SK-N-SH (cell line): ENCODE measurements at regions of chr1 and their contacts with region 1.

Region 1: GRCh38 chr1:36187800-36188593 is 32.0 kb downstream of the MAP7D1 start:
- DNase-seq: peak; percentile 86
- H3K4me3 ChIP-seq: no peak overlapping the region; a peak in 1 of 4 replicates
- H3K27ac ChIP-seq: peak overlapping the region; percentile 67 to 71
- H3K4me1 ChIP-seq: peaks cover 0 to 8% of the 10 kb centered on the region in 2 experiments; a peak in 1 of 4 replicates
- H3K27me3 ChIP-seq: no peaks in the 10 kb centered on the region
- CTCF ChIP-seq: peak; percentile 84
- EP300 ChIP-seq: no peak
- RAD21 ChIP-seq: peak; percentile 96

Region 2: GRCh38 chr1:36134505-36135329 is 53.3 kb before region 1 on chr1:
- CTCF ChIA-PET with region 1: interaction called, 26 read pairs
- POLR2A ChIA-PET with region 1: no interaction called
- DNase-seq: peak; percentile 86
- H3K4me3 ChIP-seq: no peak overlapping the region; a peak in 1 of 4 replicates
- H3K27ac ChIP-seq: peak overlapping the region; percentile 45 to 89
- H3K4me1 ChIP-seq: peaks cover 14 to 43% of the 10 kb centered on the region in 2 experiments; a peak in 3 of 4 replicates
- H3K27me3 ChIP-seq: no peaks in the 10 kb centered on the region
- CTCF ChIP-seq: peak; percentile 88
- EP300 ChIP-seq: no peak
- RAD21 ChIP-seq: peak; percentile 92

Region 3: DNA sequence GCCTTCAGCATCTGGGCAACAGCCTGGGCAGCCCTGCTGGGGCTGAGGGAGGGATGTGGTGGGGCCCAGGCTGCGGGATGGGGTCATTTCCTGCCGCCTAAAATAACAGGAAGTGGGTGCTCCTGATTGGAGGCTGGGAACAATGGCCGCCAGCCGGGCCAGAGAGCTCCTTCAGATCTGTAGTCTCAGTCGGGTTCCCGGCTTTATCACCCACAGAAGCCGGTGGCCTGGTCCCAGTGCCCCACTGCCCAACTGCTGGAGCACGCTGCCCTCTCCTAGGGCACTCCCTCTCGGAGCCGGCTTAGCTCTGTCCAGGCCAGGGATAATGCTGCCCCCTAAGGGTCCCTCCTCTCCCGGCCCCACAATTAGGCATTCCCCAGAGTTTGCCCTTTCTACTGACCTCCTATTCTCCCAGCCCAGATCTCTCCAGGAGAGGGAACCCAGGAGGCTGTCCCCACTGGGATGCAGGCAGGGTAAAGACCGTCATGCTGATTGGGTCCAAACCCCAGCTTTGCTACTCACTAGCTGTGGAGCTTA is 27.0 kb before region 1 on chr1:
- CTCF ChIA-PET with region 1: interaction called, 49 read pairs
- POLR2A ChIA-PET with region 1: interaction called, 7 read pairs
- DNase-seq: peak; percentile 86
- H3K4me3 ChIP-seq: peak overlapping the region; percentile 47 to 72
- H3K27ac ChIP-seq: peak overlapping the region; percentile 81 to 83
- H3K4me1 ChIP-seq: peaks cover 31 to 44% of the 10 kb centered on the region in 2 experiments
- H3K27me3 ChIP-seq: no peaks in the 10 kb centered on the region
- CTCF ChIP-seq: peak; percentile 64
- EP300 ChIP-seq: no peak
- RAD21 ChIP-seq: peak; percentile 45

Region 4: DNA sequence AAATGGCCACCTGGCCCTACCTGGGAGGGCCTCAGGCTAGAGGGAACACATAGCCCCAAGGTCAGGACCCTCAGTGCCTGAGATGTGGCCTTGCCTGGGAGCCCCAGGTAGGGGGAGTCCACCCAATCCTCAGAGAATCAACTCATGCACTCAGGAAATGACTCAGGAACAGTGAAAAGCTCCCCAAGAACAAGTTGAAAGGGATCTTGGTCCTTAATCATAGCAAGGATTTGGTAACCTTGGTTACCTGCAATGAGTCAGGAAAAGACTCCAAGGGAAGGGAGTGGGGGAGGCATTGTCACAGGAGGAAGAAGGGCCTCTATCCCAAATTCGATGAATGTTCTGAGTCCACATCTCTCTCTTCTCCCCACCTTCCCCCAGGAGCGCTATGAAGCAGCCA is 15.0 kb before region 1 on chr1:
- CTCF ChIA-PET with region 1: interaction called, 32 read pairs
- POLR2A ChIA-PET with region 1: interaction called, 3 read pairs
- DNase-seq: no peak
- H3K4me3 ChIP-seq: peak overlapping the region in 1 of 2 experiments; percentile 17; a peak in 1 of 4 replicates
- H3K27ac ChIP-seq: peak overlapping the region in 1 of 2 experiments; percentile 78; a peak in 2 of 4 replicates
- H3K4me1 ChIP-seq: peaks cover 0 to 15% of the 10 kb centered on the region in 2 experiments; a peak in 2 of 4 replicates
- H3K27me3 ChIP-seq: no peaks in the 10 kb centered on the region
- CTCF ChIP-seq: no peak
- EP300 ChIP-seq: no peak
- RAD21 ChIP-seq: no peak

Region 5: GRCh38 chr1:36285448-36286101 is 97.6 kb after region 1 on chr1:
- CTCF ChIA-PET with region 1: interaction called, 12 read pairs
- POLR2A ChIA-PET with region 1: no interaction called
- DNase-seq: peak; percentile 69
- H3K4me3 ChIP-seq: peak overlapping the region in 1 of 2 experiments; percentile 0; a peak in 1 of 4 replicates
- H3K27ac ChIP-seq: peak overlapping the region; percentile 65 to 83; a peak in 3 of 4 replicates
- H3K4me1 ChIP-seq: peaks cover 0 to 29% of the 10 kb centered on the region in 2 experiments; a peak in 3 of 4 replicates
- H3K27me3 ChIP-seq: no peaks in the 10 kb centered on the region
- CTCF ChIP-seq: peak; percentile 88
- EP300 ChIP-seq: no peak
- RAD21 ChIP-seq: peak; percentile 83

Region 6: DNA sequence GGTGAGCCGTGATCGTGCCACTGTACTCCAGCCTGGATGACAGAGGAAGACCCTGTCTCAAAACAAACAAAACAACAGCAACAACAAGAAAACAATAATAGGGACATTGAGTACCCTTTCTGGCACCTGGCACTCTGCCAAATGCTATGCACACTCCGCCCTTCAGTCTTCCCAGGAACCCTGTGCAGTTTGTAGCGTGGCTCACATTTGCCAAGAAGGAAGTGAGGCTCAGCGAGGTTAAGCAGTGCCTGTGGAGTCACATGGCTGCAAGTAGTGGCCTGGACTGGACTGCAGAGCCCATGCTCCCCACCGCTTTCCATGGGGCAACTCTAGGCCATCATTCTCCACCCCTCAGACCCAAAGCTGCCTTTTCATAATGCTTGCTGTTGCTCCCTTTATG is 140.7 kb after region 1 on chr1:
- CTCF ChIA-PET with region 1: no interaction called
- POLR2A ChIA-PET with region 1: no interaction called
- DNase-seq: no peak
- H3K4me3 ChIP-seq: no peak overlapping the region
- H3K27ac ChIP-seq: no peak overlapping the region
- H3K4me1 ChIP-seq: peaks cover 8% of the 10 kb centered on the region in 2 experiments; a peak in 1 of 4 replicates
- H3K27me3 ChIP-seq: no peaks in the 10 kb centered on the region
- CTCF ChIP-seq: no peak
- EP300 ChIP-seq: no peak
- RAD21 ChIP-seq: no peak

Region 7: DNA sequence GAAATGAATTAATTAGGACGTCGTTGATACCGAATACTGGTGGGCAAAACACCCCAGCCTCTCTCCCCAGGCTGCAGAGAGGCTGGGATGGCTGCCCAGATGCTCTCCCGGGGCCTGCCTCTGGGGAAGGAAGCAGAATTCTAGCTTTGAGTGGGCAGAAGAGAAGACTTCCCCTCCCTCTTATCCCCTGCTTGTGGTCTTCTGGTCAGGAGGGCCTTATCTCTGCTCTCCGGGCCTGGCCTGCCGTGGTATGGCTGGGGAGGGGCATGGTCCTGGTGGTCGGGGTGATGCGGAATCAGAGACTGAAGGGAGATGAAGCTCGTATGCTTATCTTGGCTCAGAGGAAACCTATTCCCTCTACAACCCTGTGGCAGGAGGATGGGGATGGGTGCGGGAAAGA is 304.5 kb after region 1 on chr1:
- CTCF ChIA-PET with region 1: no interaction called
- POLR2A ChIA-PET with region 1: no interaction called
- DNase-seq: no peak
- H3K4me3 ChIP-seq: no peak overlapping the region
- H3K27ac ChIP-seq: no peak overlapping the region
- H3K4me1 ChIP-seq: no peaks in the 10 kb centered on the region; a peak in 1 of 4 replicates
- H3K27me3 ChIP-seq: no peaks in the 10 kb centered on the region; the same call in 1 of the 2 replicates
- CTCF ChIP-seq: no peak
- EP300 ChIP-seq: no peak
- RAD21 ChIP-seq: no peak